ENCODE measurements at regions of chr5 and their contacts with region 1.

Region 1: DNA sequence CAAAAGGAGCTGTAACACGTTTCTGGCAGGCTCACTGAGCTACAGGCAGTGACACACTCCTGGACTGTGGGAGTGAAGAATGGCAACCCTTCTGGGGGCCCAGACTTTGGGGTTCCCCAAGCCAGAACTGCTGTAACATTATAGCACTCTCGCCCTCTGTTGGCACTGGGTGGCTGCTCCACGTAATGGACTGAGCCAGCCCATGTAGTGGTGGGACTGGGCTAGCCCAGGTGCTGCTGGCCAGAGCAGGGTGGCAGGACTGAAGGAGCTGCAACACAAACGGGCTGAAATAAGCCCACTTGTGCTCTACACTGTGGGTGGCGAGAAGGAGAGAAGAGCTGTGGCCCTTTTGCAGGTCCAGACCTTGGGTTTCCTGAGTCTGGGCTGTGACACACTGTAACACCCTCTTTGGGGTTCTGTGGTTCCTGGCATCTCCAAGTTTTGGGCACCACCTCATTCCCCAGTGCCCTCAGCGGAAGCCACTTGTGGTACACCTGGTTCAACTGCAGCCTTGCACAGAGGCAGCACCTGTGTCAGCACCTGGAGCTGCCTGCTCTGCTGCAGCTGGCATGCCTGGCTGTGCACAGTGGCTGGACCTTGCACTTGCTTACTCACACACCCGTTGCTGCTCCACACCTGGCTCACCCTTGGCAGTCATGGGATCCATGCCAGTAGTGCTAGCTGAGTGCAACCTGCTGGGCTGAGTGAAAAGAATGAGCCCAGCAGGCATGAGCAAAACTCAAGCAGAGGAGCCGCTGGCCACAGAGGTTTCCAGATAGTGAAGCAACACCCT is 95.0 kb upstream of the PRR16 start:
- DNase-seq: peak; percentile 89 to 95 (median 91)
- ATAC-seq: peak; percentile 100
- H3K4me3 ChIP-seq: no peak overlapping the region
- H3K4me1 ChIP-seq: peaks cover 6% of the 10 kb centered on the region
- CTCF ChIP-seq: no peak

Region 2: GRCh38 chr5:120017513-120017912 is 351.6 kb before region 1 on chr5:
- intact Hi-C with region 1: no loop called
- DNase-seq: no peak
- ATAC-seq: no peak
- H3K4me3 ChIP-seq: no peak overlapping the region
- H3K4me1 ChIP-seq: no peaks in the 10 kb centered on the region
- CTCF ChIP-seq: no peak

Region 3: DNA sequence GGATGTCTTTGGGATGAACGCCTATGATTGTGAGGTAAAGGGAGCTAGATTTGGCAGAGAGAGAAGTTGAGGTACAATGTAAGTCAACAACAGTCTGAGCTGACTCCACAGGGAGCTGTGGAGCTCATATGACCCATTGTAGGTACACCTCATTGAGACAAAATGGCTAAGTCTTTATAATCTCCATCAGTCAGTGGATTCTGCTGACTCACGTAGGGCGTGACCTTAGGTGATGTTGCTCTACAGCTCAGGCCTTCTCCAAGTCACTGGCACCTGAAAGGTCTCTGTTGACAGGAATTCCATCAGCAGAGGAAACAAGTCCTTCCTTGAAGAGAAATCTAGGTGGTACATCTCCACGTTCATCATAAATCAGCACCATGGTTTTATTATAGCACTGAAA is 23.2 kb before region 1 on chr5:
- intact Hi-C with region 1: loop called in 1 of 2 experiments (anchors 2 kb)
- DNase-seq: no peak
- ATAC-seq: no peak
- H3K4me3 ChIP-seq: no peak overlapping the region
- H3K4me1 ChIP-seq: no peaks in the 10 kb centered on the region
- CTCF ChIP-seq: no peak